CD14-positive monocyte (primary cell): ENCODE measurements at regions of chr5 and their contacts with region 1.

Region 1: GRCh38 chr5:147935032-147935431 is 28.7 kb upstream of the C5orf46 start:
- DNase-seq: peak; percentile 37 to 50 (median 48)
- H3K4me3 ChIP-seq: no peak overlapping the region
- H3K4me3 Mint-ChIP-seq: no peak overlapping the region
- H3K27ac ChIP-seq: no peak overlapping the region
- H3K27ac Mint-ChIP-seq: no peak overlapping the region
- H3K4me1 ChIP-seq: peaks cover 9 to 17% of the 10 kb centered on the region in 2 donors
- H3K4me1 Mint-ChIP-seq: peaks cover 17% of the 10 kb centered on the region
- H3K27me3 ChIP-seq: no peaks in the 10 kb centered on the region
- H3K27me3 Mint-ChIP-seq: no peaks in the 10 kb centered on the region
- CTCF ChIP-seq: peak; percentile 69

Region 2: DNA sequence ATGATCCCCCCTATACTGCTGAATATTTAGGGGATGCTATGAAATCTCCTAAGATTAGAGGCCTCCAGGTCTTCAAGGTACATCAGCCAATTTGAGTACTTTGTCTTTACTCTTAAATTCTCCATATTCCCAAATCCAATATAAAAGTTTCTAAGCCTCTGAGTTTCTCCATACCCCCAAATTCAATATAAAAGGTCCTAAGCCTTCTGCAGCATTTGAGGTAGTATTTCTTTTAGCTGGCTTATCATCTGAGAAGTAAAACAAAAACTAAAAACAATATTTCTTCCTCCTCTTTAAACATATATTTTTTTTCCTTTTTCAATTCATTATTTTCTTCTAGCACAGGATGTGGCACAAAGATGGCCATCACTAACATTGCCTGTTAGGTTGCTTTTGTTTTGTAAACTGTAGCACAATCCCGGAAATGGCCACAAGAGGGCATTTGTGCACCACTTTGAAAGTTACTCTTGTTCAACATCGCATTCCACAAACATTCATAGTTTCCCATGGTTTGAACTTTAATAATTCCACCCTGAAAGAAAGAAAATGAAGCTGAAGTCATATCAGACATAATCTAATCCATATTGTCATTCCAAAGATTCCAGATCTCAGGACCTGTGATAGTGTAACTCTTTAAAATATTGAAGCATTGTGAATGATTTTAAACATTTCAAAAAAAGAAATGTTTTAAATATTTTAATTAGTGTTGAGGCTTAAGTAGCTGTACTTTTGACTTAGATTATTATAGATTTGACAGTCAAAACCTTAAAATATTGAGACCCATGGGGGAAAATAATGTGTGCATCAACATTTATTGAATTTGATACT is 77.5 kb before region 1 on chr5:
- intact Hi-C with region 1: loop called in 1 of 2 experiments (anchors 10 kb)
- DNase-seq: peak; percentile 32 to 50 (median 37)
- H3K4me3 ChIP-seq: no peak overlapping the region
- H3K4me3 Mint-ChIP-seq: no peak overlapping the region
- H3K27ac ChIP-seq: no peak overlapping the region
- H3K27ac Mint-ChIP-seq: no peak overlapping the region
- H3K4me1 ChIP-seq: peaks cover 0 to 5% of the 10 kb centered on the region in 2 donors
- H3K4me1 Mint-ChIP-seq: peaks cover 21% of the 10 kb centered on the region
- H3K27me3 ChIP-seq: no peaks in the 10 kb centered on the region
- H3K27me3 Mint-ChIP-seq: no peaks in the 10 kb centered on the region
- CTCF ChIP-seq: peak; percentile 90

Region 3: GRCh38 chr5:147887024-147887627 is 47.9 kb before region 1 on chr5:
- intact Hi-C with region 1: loop called (anchors 5 kb)
- DNase-seq: peak in 2 of 3 donors; percentile 12 to 25
- H3K4me3 ChIP-seq: no peak overlapping the region
- H3K4me3 Mint-ChIP-seq: no peak overlapping the region
- H3K27ac ChIP-seq: no peak overlapping the region
- H3K27ac Mint-ChIP-seq: no peak overlapping the region
- H3K4me1 ChIP-seq: no peaks in the 10 kb centered on the region
- H3K4me1 Mint-ChIP-seq: peaks cover 6% of the 10 kb centered on the region
- H3K27me3 ChIP-seq: no peaks in the 10 kb centered on the region
- H3K27me3 Mint-ChIP-seq: peaks cover 0 to 2% (median 2%) of the 10 kb centered on the region in 3 donors
- CTCF ChIP-seq: peak; percentile 74